Gastrocnemius medialis (tissue), 4 donors: ENCODE measurements at regions of chr2 and their contacts with region 1.

Region 1: GRCh38 chr2:226791487-226792081 is 8.0 kb downstream of the IRS1 start:
- DNase-seq: peak; percentile 89 to 93
- ATAC-seq: peak; percentile 71 to 74
- H3K4me3 ChIP-seq: peak overlapping the region; percentile 71 to 89 (median 80)
- H3K27ac ChIP-seq: peak overlapping the region; percentile 95 to 99 (median 98)
- H3K4me1 ChIP-seq: peaks cover 63 to 74% of the 10 kb centered on the region in 2 donors
- H3K27me3 ChIP-seq: no peaks in the 10 kb centered on the region
- CTCF ChIP-seq: peak; percentile 45 to 80 (median 72)
- POLR2A ChIP-seq: peak; percentile 79 to 95

Region 2: GRCh38 chr2:226137201-226137811 is 654.3 kb before region 1 on chr2:
- in situ Hi-C with region 1: no loop called
- intact Hi-C with region 1: loop called (anchors 10 kb)
- DNase-seq: no peak
- ATAC-seq: no peak
- H3K4me3 ChIP-seq: no peak overlapping the region
- H3K27ac ChIP-seq: peak overlapping the region in 1 of 4 donors; percentile 13
- H3K4me1 ChIP-seq: peaks cover 12 to 20% of the 10 kb centered on the region in 2 donors
- H3K27me3 ChIP-seq: no peaks in the 10 kb centered on the region
- CTCF ChIP-seq: no peak
- POLR2A ChIP-seq: no peak

Region 3: DNA sequence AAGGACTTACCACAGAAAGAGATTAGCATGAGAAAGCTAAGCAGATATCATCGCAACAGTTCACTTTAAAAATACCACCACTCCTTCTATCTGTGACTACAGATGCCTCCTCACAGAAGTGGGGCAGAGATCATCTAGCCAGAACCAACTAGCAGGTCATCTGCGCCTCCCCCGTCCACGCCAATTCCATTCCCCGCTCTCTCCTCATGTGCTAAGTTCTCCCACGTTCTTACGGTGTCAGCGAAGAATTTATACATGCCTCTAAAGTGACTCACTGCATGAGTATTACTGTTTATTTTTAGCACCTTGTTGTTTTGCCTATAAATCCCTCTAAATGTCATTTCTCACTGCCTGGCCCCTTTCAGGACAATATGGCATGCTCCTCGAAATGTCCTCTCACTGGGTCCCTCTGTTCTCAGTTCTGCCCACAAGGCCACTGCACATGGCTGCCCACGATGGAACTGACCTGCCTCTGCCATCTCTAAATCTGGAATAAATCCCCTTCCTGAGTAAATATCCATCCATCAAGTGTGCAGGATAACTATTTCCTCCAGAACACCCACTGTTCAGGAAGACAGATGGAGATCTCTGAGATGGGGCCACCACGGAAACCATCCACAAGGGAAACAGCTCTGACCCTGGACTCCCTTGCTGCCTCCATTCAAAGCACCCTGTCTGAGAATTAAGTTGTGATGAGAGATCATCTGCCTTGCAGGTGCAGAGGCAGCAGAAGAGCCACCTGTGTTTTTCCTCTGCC is 129.6 kb before region 1 on chr2:
- in situ Hi-C with region 1: loop called in 2 of 4 experiments (anchors 5 to 25 kb)
- intact Hi-C with region 1: loop called (anchors 2 kb)
- DNase-seq: peak; percentile 71 to 72
- ATAC-seq: peak; percentile 74 to 76
- H3K4me3 ChIP-seq: no peak overlapping the region
- H3K27ac ChIP-seq: peak overlapping the region; percentile 77 to 86 (median 82)
- H3K4me1 ChIP-seq: peaks cover 29 to 46% of the 10 kb centered on the region in 2 donors
- H3K27me3 ChIP-seq: no peaks in the 10 kb centered on the region
- CTCF ChIP-seq: no peak
- POLR2A ChIP-seq: no peak

Region 4: GRCh38 chr2:226742347-226742746 is 49.2 kb before region 1 on chr2:
- in situ Hi-C with region 1: loop called in 1 of 4 experiments (anchors 10 kb)
- intact Hi-C with region 1: loop called (anchors 10 kb)
- DNase-seq: peak; percentile 63 to 81
- ATAC-seq: peak; percentile 86 to 93
- H3K4me3 ChIP-seq: peak overlapping the region; percentile 6 to 32 (median 26)
- H3K27ac ChIP-seq: peak overlapping the region; percentile 73 to 91 (median 86)
- H3K4me1 ChIP-seq: peaks cover 53 to 64% of the 10 kb centered on the region in 2 donors
- H3K27me3 ChIP-seq: no peaks in the 10 kb centered on the region
- CTCF ChIP-seq: no peak
- POLR2A ChIP-seq: no peak

Region 5: GRCh38 chr2:226777611-226778010 is 14.0 kb before region 1 on chr2:
- in situ Hi-C with region 1: no loop called
- intact Hi-C with region 1: loop called (anchors 2 kb)
- DNase-seq: no peak
- ATAC-seq: no peak
- H3K4me3 ChIP-seq: no peak overlapping the region
- H3K27ac ChIP-seq: peak overlapping the region; percentile 82 to 91 (median 83)
- H3K4me1 ChIP-seq: peaks cover 54 to 61% of the 10 kb centered on the region in 2 donors
- H3K27me3 ChIP-seq: no peaks in the 10 kb centered on the region
- CTCF ChIP-seq: no peak
- POLR2A ChIP-seq: no peak

Region 6: GRCh38 chr2:227006189-227006897 is 214.8 kb after region 1 on chr2:
- in situ Hi-C with region 1: no loop called
- intact Hi-C with region 1: no loop called
- DNase-seq: no peak
- ATAC-seq: no peak
- H3K4me3 ChIP-seq: no peak overlapping the region
- H3K27ac ChIP-seq: no peak overlapping the region
- H3K4me1 ChIP-seq: no peaks in the 10 kb centered on the region
- H3K27me3 ChIP-seq: no peaks in the 10 kb centered on the region
- CTCF ChIP-seq: no peak
- POLR2A ChIP-seq: no peak

Region 7: DNA sequence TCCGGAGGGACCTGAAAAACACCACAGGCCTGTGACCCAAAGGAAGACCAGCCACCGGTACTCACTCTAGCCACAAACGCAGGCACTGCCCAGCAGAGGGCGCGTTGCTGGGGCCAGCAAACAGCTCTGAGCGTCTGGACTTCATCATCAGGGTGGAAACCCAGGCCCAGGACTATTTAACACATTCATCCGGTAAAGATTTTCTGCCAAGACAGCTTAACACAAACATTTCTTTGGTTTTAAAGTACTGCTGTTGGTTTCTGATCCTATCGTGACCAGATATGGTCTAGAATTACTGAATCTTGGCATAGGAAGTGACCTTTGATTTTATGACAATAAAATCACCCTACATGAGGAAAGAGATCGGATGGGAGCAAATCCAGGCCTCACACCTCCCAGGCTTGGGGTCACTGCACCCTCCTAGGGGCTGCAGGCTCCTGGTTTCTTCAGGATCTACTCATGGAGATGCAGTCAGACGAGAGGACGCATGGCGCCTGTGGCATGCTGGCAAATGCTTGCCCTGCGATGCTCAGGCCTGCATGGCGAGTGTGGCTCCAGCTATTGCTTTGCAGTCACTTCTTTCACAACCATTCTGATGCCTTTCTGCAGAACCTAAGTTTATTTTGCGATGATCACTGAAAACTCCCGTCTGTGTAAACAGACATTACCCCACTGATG is 242.0 kb after region 1 on chr2:
- in situ Hi-C with region 1: no loop called
- intact Hi-C with region 1: no loop called
- DNase-seq: no peak
- ATAC-seq: no peak
- H3K4me3 ChIP-seq: no peak overlapping the region
- H3K27ac ChIP-seq: no peak overlapping the region
- H3K4me1 ChIP-seq: no peaks in the 10 kb centered on the region
- H3K27me3 ChIP-seq: no peaks in the 10 kb centered on the region
- CTCF ChIP-seq: peak in 1 of 5 experiments; percentile 21
- POLR2A ChIP-seq: no peak

Region 8: DNA sequence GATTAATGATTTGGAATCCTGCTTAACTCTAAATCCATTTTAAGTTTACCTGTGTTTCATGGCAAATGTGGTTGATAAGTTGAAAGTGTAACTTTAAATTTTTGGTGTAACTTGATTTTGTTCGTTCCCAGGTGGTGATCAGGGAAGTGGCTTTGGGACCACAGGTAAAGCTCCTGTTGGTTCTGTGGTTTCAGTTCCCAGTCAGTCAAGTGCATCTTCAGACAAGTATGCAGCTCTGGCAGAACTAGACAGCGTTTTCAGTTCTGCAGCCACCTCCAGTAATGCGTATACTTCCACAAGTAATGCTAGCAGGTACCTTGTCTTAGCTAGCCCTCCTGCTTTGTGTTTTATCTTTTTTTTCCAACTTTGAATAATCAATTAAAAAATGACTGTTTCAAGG is 743.1 kb after region 1 on chr2:
- in situ Hi-C with region 1: no loop called
- intact Hi-C with region 1: no loop called
- DNase-seq: no peak
- ATAC-seq: no peak
- H3K4me3 ChIP-seq: no peak overlapping the region
- H3K27ac ChIP-seq: no peak overlapping the region
- H3K4me1 ChIP-seq: no peaks in the 10 kb centered on the region
- H3K27me3 ChIP-seq: no peaks in the 10 kb centered on the region
- CTCF ChIP-seq: no peak
- POLR2A ChIP-seq: no peak